Calu3 (cell line): ENCODE measurements at regions of chr6 and their contacts with region 1.

Region 1: GRCh38 chr6:107729100-107729499 is 95.0 kb downstream of the SCML4 start:
- DNase-seq: peak; percentile 10
- H3K4me3 Mint-ChIP-seq: no peak overlapping the region
- H3K27ac Mint-ChIP-seq: no peak overlapping the region
- H3K4me1 Mint-ChIP-seq: no peaks in the 10 kb centered on the region
- H3K27me3 Mint-ChIP-seq: peaks cover 76% of the 10 kb centered on the region
- CTCF ChIP-seq: no peak

Region 2: GRCh38 chr6:107847844-107848802 is 119.0 kb after region 1 on chr6:
- CTCF ChIA-PET with region 1: no interaction called
- intact Hi-C with region 1: loop called (anchors 10 kb)
- DNase-seq: peak; percentile 94
- H3K4me3 Mint-ChIP-seq: peak overlapping the region; percentile 70
- H3K27ac Mint-ChIP-seq: no peak overlapping the region
- H3K4me1 Mint-ChIP-seq: peaks cover 8% of the 10 kb centered on the region
- H3K27me3 Mint-ChIP-seq: no peaks in the 10 kb centered on the region
- CTCF ChIP-seq: peak; percentile 91